ENCODE measurements at regions of chr12 and their contacts with region 1.

Region 1: DNA sequence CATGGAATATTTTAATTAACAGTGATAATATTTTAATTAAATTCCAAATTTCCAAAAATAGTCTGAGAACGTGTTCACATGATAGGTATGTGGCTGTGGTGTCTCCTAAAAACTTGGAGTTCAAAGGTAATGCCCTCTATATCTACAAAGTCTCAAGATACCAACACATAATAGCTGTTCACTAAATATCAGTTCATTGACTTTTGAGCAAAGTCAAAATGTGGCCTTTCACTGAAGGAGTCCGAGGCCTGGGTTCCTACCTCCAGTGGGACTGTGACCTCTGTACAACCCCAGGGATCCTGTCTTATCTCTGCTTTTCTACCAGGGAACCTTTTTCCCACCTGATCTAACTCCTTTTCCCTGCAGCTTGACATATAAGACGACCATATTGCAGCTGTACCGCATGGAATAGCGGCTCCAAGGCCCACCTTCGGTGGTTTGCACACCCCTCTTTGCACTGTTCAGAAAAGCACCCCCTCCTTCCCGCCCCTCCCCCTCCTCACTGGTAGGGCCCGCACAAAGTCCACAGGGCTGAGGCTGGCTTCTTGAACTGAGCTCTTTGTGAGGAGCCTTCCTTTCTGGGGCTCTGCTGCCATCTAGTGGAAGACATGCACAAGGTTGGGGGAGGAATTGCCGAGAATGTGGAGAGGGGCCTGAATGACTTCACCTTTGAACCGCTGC is 3.1 kb downstream of the CCND2 start:
- DNase-seq: peak; percentile 92
- ATAC-seq: peak; percentile 24
- H3K4me3 Mint-ChIP-seq: peak overlapping the region; percentile 100
- H3K27ac Mint-ChIP-seq: peak overlapping the region; percentile 100
- H3K4me1 Mint-ChIP-seq: peaks cover 47% of the 10 kb centered on the region
- H3K27me3 Mint-ChIP-seq: no peaks in the 10 kb centered on the region
- CTCF ChIP-seq: peak; percentile 77

Region 2: DNA sequence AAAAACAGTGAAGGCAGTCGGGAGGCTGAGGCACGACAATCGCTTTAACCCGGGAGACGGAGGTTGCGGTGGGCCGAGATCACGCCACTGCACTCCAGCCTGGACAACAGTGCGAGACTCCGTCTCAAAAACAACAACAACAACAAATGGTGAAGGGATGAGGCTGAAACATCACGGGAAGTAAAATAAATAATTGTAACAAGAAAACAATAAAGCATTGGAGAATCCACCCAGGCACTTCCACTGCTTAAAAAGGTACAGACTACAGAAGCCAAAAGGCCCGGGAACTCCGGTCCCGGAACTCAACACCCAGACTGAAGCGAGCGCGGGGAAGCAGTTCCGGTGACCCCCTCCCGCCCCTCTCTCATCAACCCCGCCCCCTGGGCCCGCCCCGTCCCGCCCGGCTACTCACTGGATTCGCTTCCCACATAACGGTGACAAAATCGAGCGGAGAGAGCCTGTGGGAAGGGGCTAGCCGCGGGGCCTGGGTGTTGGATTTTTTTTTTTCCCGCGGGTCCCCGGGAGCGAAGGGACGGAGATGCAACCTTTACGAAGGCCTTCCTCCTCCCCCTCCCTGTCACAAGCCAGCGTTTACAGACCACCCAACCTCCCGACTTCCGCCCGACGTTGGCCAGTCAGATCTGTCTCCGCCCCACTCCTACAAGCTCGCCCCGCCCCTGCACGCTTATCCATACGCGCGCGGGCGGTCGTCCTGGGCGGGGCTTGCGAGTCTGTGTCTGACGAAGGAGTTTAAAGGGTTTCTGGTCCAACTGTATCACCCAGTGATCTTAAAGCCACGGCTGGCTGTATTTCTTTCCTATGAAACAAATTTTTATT is 403.6 kb before region 1 on chr12 and contains the start of gene PARP11:
- CTCF ChIA-PET with region 1: interaction called, 6 read pairs
- POLR2A ChIA-PET with region 1: interaction called, 3 read pairs
- intact Hi-C with region 1: loop called (anchors 5 kb)
- DNase-seq: peak; percentile 99
- ATAC-seq: peak; percentile 96
- H3K4me3 Mint-ChIP-seq: peak within 1 kb of the TSS; percentile 93
- H3K27ac Mint-ChIP-seq: peak within 1 kb of the TSS; percentile 95
- H3K4me1 Mint-ChIP-seq: peaks cover 37% of the 10 kb centered on the region
- H3K27me3 Mint-ChIP-seq: no peaks in the 10 kb centered on the region
- CTCF ChIP-seq: no peak
- total RNA-seq, gene PARP11: 19.7 to 22.3 TPM

Region 3: GRCh38 chr12:3988519-3989448 is 287.9 kb before region 1 on chr12:
- CTCF ChIA-PET with region 1: interaction called, 136 read pairs
- POLR2A ChIA-PET with region 1: interaction called, 20 read pairs
- intact Hi-C with region 1: no loop called
- DNase-seq: peak; percentile 67
- ATAC-seq: peak; percentile 78
- H3K4me3 Mint-ChIP-seq: peak overlapping the region; percentile 58
- H3K27ac Mint-ChIP-seq: peak overlapping the region; percentile 85
- H3K4me1 Mint-ChIP-seq: peaks cover 32% of the 10 kb centered on the region
- H3K27me3 Mint-ChIP-seq: no peaks in the 10 kb centered on the region
- CTCF ChIP-seq: no peak

Region 4: DNA sequence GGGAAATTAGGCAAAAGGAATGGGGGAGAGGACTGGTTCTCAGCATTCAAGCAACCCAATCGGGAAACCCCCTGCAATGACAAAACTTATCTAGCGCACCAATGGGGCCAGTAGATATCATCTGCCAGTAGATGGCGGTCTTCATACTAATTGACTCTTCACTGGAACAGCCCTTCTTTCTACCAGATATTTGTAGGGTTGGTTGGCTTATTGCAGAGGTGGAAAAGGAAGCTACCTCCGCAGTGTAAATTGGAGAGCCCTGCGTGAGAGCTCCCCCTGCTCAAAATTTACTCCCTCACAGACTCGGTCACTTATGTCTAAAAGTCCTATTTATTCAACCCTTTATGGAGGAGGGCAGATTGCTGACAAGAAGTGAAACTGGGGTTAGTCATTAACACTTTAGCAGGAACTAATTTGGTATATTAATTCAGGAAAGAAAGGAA is 169.2 kb before region 1 on chr12:
- CTCF ChIA-PET with region 1: interaction called, 50 read pairs
- POLR2A ChIA-PET with region 1: interaction called, 26 read pairs
- intact Hi-C with region 1: loop called (anchors 2 kb)
- DNase-seq: peak; percentile 88
- ATAC-seq: peak; percentile 92
- H3K4me3 Mint-ChIP-seq: peak overlapping the region; percentile 44
- H3K27ac Mint-ChIP-seq: peak overlapping the region; percentile 90
- H3K4me1 Mint-ChIP-seq: peaks cover 39% of the 10 kb centered on the region
- H3K27me3 Mint-ChIP-seq: peaks cover 2% of the 10 kb centered on the region
- CTCF ChIP-seq: peak; percentile 68

Region 5: GRCh38 chr12:4135919-4136605 is 140.6 kb before region 1 on chr12:
- CTCF ChIA-PET with region 1: interaction called, 15 read pairs
- POLR2A ChIA-PET with region 1: interaction called, 375 read pairs
- intact Hi-C with region 1: no loop called
- DNase-seq: peak; percentile 94
- ATAC-seq: peak; percentile 83
- H3K4me3 Mint-ChIP-seq: peak overlapping the region; percentile 31
- H3K27ac Mint-ChIP-seq: peak overlapping the region; percentile 95
- H3K4me1 Mint-ChIP-seq: peaks cover 62% of the 10 kb centered on the region
- H3K27me3 Mint-ChIP-seq: no peaks in the 10 kb centered on the region
- CTCF ChIP-seq: no peak

Region 6: DNA sequence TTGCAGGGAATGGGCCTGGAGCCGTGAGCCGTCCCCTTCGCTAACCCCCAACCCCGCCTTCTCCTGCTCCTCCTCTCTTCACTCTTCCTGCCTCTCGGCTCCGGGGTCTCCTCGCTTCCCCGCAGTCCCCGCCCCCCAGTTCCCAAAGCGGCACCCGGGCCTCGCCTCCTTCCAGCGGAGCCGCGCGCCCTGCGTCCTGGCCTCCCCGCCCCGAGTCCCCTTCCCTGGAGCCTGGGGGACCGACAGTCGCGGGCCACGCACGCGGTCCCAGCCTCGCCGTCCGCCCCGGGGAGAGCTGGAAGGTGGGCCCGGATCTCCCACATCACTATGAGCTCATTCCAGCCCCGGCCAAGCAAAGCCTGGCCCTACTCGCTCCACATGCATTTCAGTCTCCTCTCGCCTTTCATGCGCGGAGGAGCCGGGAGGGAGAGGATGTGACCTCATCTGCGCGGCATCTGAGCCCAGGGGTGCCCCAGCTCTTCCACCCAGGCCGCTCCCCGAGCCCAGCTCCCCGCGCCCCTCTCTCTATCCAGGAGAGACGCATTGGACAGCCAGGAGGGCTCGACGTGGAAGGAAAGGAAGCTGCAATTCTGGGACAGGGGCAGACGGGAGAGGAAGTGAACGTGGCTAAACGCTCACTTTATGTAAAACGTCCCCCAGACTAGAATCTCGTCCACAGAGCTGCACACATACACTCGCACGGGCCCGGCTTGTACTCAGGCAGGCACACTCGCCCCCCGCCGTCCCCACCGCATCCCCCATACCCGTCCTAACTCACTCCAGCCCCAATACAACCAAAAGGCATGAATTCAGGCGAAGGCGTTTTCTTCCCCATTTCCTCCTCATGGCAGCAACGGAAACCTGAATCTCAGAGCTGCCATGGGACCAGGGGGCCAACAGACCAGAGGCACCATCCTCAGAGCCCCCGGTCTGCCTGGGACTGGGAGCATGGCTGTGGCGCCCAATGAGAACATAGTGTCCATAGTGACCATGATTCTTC is 111.8 kb before region 1 on chr12:
- CTCF ChIA-PET with region 1: interaction called, 11 read pairs
- POLR2A ChIA-PET with region 1: interaction called, 5 read pairs
- intact Hi-C with region 1: no loop called
- DNase-seq: peak; percentile 81
- ATAC-seq: peak; percentile 89
- H3K4me3 Mint-ChIP-seq: peak overlapping the region; percentile 76
- H3K27ac Mint-ChIP-seq: peak overlapping the region; percentile 97
- H3K4me1 Mint-ChIP-seq: peaks cover 39% of the 10 kb centered on the region
- H3K27me3 Mint-ChIP-seq: peaks cover 3% of the 10 kb centered on the region
- CTCF ChIP-seq: no peak

Region 7: GRCh38 chr12:4191642-4192041 is 85.0 kb before region 1 on chr12:
- CTCF ChIA-PET with region 1: no interaction called
- POLR2A ChIA-PET with region 1: no interaction called
- intact Hi-C with region 1: no loop called
- DNase-seq: no peak
- ATAC-seq: no peak
- H3K4me3 Mint-ChIP-seq: no peak overlapping the region
- H3K27ac Mint-ChIP-seq: no peak overlapping the region
- H3K4me1 Mint-ChIP-seq: no peaks in the 10 kb centered on the region
- H3K27me3 Mint-ChIP-seq: no peaks in the 10 kb centered on the region
- CTCF ChIP-seq: no peak

Region 8: GRCh38 chr12:4257442-4257841 is 19.2 kb before region 1 on chr12:
- CTCF ChIA-PET with region 1: interaction called, 12 read pairs
- POLR2A ChIA-PET with region 1: interaction called, 17 read pairs
- intact Hi-C with region 1: no loop called
- DNase-seq: no peak
- ATAC-seq: no peak
- H3K4me3 Mint-ChIP-seq: no peak overlapping the region
- H3K27ac Mint-ChIP-seq: no peak overlapping the region
- H3K4me1 Mint-ChIP-seq: peaks cover 17% of the 10 kb centered on the region
- H3K27me3 Mint-ChIP-seq: peaks cover 4% of the 10 kb centered on the region
- CTCF ChIP-seq: no peak

Measured in activated CD8-positive, alpha-beta T cell treated with anti-CD3 and anti-CD28 coated beads for 36 hours (primary cell).